Panc1 (cell line): ENCODE measurements at regions of chr11 and their contacts with region 1.

Region 1: DNA sequence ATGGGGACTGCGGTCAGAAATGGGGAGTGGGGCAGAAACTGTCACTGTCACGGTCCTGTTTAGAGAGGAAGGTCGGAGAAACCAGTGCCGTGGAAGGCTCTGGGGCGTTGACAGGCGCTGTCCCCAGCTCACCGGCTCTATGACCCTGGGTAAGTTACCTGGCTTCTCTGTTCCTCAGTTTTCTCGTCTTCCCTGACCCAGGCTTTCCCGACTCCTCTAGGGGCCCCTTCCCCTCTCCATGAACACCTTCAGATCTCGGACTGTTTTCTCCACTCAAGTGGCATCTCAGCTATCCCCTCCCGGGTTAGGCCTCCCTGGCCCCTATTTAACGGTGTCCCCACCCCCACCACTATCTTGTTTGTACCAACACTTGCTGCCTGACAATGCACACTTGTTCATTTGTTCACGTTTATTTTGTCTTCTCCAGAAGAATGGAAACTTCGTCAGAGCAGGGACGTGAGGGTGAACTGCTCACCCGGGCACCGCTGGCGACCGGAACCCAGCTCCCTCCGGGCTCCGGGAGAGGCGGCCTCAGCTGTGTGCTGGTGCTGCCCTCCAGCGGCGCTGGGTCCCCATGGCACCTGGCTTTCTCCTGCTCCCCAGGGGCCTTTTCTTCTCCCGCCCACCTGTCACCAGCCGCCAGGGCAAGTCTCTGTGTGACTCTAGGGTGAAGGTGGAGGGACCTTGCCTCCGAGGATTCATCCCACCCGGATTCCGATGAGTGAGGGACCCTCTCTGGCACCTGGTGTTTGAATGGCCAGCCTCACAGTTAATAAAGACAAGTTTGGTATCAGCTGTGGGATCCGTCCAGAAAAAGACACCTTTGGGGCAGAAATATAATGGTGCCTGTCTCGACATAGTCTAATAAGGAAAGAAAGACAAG is 33.1 kb upstream of the SLC35C1 start:
- DNase-seq: peak; percentile 42
- ATAC-seq: peak; percentile 98
- H3K4me3 ChIP-seq: peak overlapping the region; percentile 40 to 75
- H3K27ac ChIP-seq: no peak overlapping the region
- H3K4me1 ChIP-seq: no peaks in the 10 kb centered on the region
- H3K27me3 ChIP-seq: peaks cover 7% of the 10 kb centered on the region
- CTCF ChIP-seq: peak; percentile 92

Region 2: GRCh38 chr11:45339729-45340519 is 431.9 kb before region 1 on chr11:
- CTCF ChIA-PET with region 1: interaction called, 5 read pairs
- POLR2A ChIA-PET with region 1: no interaction called
- in situ Hi-C with region 1: no loop called
- intact Hi-C with region 1: loop called (anchors 2 kb)
- DNase-seq: peak; percentile 50
- ATAC-seq: peak; percentile 98
- H3K4me3 ChIP-seq: peak overlapping the region; percentile 4 to 35; a peak in 3 of 4 replicates
- H3K27ac ChIP-seq: no peak overlapping the region
- H3K4me1 ChIP-seq: no peaks in the 10 kb centered on the region
- H3K27me3 ChIP-seq: peaks cover 12% of the 10 kb centered on the region; the same call in 1 of the 2 replicates
- CTCF ChIP-seq: peak; percentile 95

Region 3: DNA sequence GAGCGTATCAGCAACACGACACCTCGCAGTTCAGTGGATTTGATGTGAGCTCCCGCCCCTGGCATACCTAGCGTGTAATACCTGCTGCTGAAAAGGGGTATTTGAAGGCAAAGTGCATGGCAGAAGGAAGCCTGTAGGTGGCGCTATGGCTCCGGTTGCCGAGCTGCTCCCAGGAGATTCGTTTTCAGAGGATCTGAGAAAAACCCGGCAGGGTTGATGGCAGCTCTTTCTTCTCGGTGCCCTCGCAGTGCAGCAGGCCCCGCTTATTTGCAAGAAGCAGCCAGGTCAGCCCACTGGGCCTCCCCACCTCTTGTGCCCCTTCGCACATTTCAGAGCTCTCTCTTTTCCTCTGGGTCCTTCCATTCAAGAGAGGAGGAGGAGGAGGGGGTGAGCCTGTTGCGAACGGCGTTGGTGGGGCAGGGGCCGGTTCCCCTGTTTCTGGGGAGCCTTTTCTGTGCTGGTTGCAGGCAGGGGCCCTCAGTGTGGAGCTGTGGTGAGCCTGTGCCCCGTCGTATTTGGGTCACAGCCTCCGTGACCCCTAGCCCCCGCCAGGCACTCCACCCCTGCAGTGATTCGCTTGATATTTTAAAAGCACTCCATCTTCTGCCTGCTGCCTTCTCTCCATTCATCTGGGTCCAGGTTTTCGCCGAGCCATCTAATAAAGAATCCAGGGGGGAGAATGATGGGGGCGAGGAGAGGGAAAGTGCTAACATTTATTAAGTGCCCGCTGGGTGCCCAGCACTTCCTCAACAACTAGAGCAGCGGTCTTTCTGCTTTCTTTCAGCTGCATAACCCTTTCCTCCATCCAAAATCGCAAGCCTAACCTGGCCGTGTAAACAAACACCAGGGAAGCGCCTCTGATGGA is 400.3 kb before region 1 on chr11:
- CTCF ChIA-PET with region 1: interaction called, 27 read pairs
- POLR2A ChIA-PET with region 1: no interaction called
- in situ Hi-C with region 1: no loop called
- intact Hi-C with region 1: loop called (anchors 1 kb)
- DNase-seq: peak; percentile 41
- ATAC-seq: peak; percentile 88
- H3K4me3 ChIP-seq: no peak overlapping the region
- H3K27ac ChIP-seq: no peak overlapping the region
- H3K4me1 ChIP-seq: peaks cover 4% of the 10 kb centered on the region; the same call in 1 of the 2 replicates
- H3K27me3 ChIP-seq: peaks cover 16% of the 10 kb centered on the region
- CTCF ChIP-seq: peak; percentile 96

Region 4: DNA sequence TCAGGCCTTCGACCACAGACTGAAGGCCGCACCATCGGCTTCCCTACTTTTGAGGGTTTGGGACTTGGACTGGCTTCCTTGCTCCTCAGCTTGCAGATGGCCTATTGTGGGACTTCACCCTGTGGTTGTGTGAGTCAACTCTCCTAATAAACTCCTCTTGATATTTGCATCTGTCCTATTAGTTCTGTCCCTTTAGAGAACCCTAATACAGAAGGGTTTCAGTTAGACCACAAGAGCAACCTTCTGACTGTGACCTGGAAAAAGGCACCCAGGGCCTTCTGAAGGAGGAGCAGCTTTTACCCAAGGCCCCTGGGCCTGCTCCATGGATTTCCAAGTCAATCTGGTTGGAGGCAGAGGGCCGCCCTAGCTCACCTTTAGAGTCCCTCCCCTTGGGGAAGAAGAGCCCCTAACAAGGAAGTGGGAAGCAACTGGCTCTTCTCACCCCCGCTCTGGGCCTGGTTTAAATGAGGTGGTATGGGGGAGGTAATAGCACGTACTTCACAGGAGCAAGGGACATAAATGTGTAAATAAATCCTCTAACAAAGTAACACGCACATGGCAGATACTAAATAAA is 95.2 kb before region 1 on chr11:
- CTCF ChIA-PET with region 1: interaction called, 3 read pairs
- POLR2A ChIA-PET with region 1: no interaction called
- in situ Hi-C with region 1: no loop called
- intact Hi-C with region 1: loop called (anchors 5 kb)
- DNase-seq: no peak
- ATAC-seq: no peak
- H3K4me3 ChIP-seq: no peak overlapping the region
- H3K27ac ChIP-seq: no peak overlapping the region
- H3K4me1 ChIP-seq: no peaks in the 10 kb centered on the region
- H3K27me3 ChIP-seq: no peaks in the 10 kb centered on the region
- CTCF ChIP-seq: no peak

Region 5: DNA sequence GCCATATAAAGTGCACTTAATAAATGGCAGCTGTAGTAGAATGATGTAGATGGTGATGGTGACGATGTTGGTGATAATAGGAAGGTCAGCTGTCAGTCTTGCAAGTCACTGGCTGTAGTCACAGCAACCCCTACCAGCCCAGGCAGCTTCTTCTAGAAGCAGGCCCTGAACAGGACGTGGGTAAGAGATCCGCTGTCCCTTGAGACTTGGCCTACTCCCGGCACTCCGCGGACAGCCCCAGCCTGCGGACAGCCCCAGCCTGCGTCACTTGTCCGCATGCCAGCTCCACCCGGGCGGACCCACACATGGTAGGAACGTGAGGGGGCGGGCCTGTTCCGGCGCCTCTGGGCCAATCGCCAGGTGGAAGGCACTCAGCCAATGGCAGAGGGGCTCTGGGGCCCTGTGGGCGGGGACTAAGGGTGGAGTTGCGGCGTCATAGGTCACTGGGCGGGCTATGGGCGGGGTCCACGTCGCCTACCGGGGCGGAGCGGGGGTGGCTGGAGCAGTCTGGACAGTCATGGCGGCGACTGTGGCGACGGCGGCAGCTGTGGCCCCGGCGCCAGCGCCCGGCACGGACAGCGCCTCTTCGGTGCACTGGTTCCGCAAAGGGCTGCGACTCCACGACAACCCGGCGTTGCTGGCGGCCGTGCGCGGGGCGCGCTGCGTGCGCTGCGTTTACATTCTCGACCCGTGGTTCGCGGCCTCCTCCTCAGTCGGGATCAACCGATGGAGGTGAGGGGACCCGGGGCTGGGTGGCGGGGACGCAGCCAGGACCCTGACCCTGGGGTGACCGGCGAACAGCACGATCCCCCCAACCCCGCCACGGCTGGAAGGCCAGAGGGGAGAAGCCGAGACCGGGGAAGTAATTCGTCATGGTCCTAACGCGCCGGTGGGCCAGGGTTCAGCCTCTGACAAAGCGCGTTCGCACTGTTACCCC is 75.4 kb after region 1 on chr11 and contains the start of gene CRY2:
- CTCF ChIA-PET with region 1: no interaction called
- POLR2A ChIA-PET with region 1: interaction called, 15 read pairs
- in situ Hi-C with region 1: no loop called
- intact Hi-C with region 1: no loop called
- DNase-seq: peak; percentile 79
- ATAC-seq: peak; percentile 98
- H3K4me3 ChIP-seq: peak within 1 kb of the TSS; percentile 78 to 92
- H3K27ac ChIP-seq: peak within 1 kb of the TSS; percentile 79
- H3K4me1 ChIP-seq: peaks cover 10% of the 10 kb centered on the region
- H3K27me3 ChIP-seq: peaks cover 7% of the 10 kb centered on the region; the same call in 1 of the 2 replicates
- CTCF ChIP-seq: no peak
- total RNA-seq, gene CRY2: 14.6 TPM